Lower leg skin (tissue), 4 donors: ENCODE measurements at regions of chr11 and their contacts with region 1.

Region 1: GRCh38 chr11:30260813-30261212 is 30.0 kb downstream of the FSHB start:
- DNase-seq: no peak
- H3K4me3 ChIP-seq: no peak overlapping the region
- CTCF ChIP-seq: no peak
- POLR2A ChIP-seq: no peak

Region 2: DNA sequence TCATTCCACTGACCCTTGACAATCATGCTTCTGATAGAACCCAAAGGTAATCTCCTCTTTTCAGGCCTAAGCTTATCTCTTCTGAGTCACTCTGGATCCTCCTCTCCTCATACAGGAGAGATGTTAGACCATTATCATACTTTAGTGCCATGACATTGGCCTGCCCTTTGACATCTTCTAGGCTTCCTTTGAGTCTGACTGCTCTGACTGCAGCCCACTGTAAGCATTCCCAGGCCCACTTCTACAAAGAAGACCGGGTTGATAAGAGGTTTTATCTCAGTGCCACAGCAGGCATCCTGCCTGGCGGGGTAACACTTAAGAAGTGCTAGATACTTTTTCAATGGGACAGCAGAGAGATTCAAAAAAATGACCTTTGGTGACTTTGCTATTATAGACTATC is 682.0 kb before region 1 on chr11:
- intact Hi-C with region 1: no loop called
- DNase-seq: no peak
- H3K4me3 ChIP-seq: no peak overlapping the region
- CTCF ChIP-seq: no peak
- POLR2A ChIP-seq: no peak

Region 3: GRCh38 chr11:32137263-32137662 is 1876.5 kb after region 1 on chr11:
- intact Hi-C with region 1: loop called (anchors 10 kb)
- DNase-seq: no peak
- H3K4me3 ChIP-seq: no peak overlapping the region
- CTCF ChIP-seq: no peak
- POLR2A ChIP-seq: no peak